ENCODE measurements at regions of chr4 and their contacts with region 1.

Region 1: DNA sequence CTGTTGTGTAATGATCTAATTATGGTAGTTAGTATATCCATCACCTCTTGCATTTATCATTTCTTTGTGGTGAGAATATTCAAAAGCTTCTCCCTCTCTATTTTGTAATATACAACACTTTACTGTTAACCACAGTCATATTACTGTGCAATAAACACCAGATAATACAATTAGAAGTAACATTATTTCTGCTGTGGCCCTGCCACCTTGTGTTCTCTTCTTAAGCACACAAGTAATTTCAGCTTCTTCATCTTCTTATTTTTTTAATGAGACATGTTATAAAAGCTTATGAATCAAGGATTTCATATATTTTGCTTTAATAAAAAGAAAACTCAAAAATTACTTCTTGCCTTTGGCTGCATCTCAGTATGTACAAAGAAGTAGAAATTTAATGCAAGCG is 675.2 kb upstream of the INTU start:
- DNase-seq: peak in 1 of 4 experiments; percentile 45
- ATAC-seq: no peak
- H3K4me3 ChIP-seq: peak overlapping the region; percentile 50
- H3K27ac ChIP-seq: peak overlapping the region; percentile 72; the same call in 2 of the 3 replicates
- H3K4me1 ChIP-seq: peaks cover 0 to 11% of the 10 kb centered on the region in 2 experiments; a peak in 1 of 5 replicates
- H3K27me3 ChIP-seq: no peaks in the 10 kb centered on the region
- CTCF ChIP-seq: peak in 1 of 3 experiments; percentile 31; a peak in 1 of 6 replicates
- EP300 ChIP-seq: no peak
- POLR2A ChIP-seq: no peak
- RAD21 ChIP-seq: peak in 1 of 2 experiments; percentile 50; a peak in 2 of 4 replicates

Region 2: GRCh38 chr4:126611900-126612299 is 345.7 kb before region 1 on chr4:
- CTCF ChIA-PET with region 1: no interaction called
- POLR2A ChIA-PET with region 1: interaction called, 3 read pairs
- in situ Hi-C with region 1: no loop called
- intact Hi-C with region 1: loop called (anchors 5 kb)
- DNase-seq: no peak
- ATAC-seq: no peak
- H3K4me3 ChIP-seq: no peak overlapping the region
- H3K27ac ChIP-seq: no peak overlapping the region; the same call in 2 of the 3 replicates
- H3K4me1 ChIP-seq: peaks cover 0 to 3% of the 10 kb centered on the region in 2 experiments; a peak in 3 of 5 replicates
- H3K27me3 ChIP-seq: no peaks in the 10 kb centered on the region
- CTCF ChIP-seq: no peak
- EP300 ChIP-seq: no peak
- POLR2A ChIP-seq: no peak
- RAD21 ChIP-seq: no peak

Region 3: GRCh38 chr4:126733301-126733700 is 224.3 kb before region 1 on chr4:
- CTCF ChIA-PET with region 1: no interaction called
- POLR2A ChIA-PET with region 1: interaction called, 3 read pairs
- in situ Hi-C with region 1: no loop called
- intact Hi-C with region 1: loop called (anchors 1 kb)
- DNase-seq: peak in 1 of 4 experiments; percentile 47
- ATAC-seq: peak; percentile 59
- H3K4me3 ChIP-seq: peak overlapping the region; percentile 48
- H3K27ac ChIP-seq: peak overlapping the region; percentile 78
- H3K4me1 ChIP-seq: peaks cover 0 to 13% of the 10 kb centered on the region in 2 experiments; a peak in 4 of 5 replicates
- H3K27me3 ChIP-seq: no peaks in the 10 kb centered on the region
- CTCF ChIP-seq: no peak
- EP300 ChIP-seq: peak; percentile 9; the same call in 1 of the 2 replicates
- POLR2A ChIP-seq: no peak
- RAD21 ChIP-seq: no peak

Region 4: DNA sequence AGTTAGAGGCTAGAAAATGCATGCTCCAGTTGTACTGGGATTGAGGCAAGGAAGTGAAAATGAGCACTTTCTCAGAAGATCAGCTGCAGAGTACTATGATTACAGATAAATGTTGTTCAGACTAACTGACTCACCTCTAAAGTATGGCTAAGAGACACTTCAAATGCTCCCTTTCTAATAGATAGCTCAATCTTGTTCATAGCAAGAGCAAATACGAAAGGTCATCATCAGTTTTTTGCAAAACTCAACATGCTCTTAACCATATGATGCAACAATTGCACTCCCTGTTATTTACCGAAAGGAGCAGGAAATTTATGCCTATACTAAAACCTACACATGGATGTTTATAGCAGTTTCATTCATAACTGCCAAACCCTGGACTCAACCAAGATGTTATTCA is 163.2 kb before region 1 on chr4:
- CTCF ChIA-PET with region 1: no interaction called
- POLR2A ChIA-PET with region 1: interaction called, 11 read pairs
- in situ Hi-C with region 1: no loop called
- intact Hi-C with region 1: loop called (anchors 5 kb)
- DNase-seq: peak in 1 of 4 experiments; percentile 46
- ATAC-seq: peak; percentile 66
- H3K4me3 ChIP-seq: no peak overlapping the region
- H3K27ac ChIP-seq: peak overlapping the region; percentile 35
- H3K4me1 ChIP-seq: peaks cover 0 to 7% of the 10 kb centered on the region in 2 experiments; a peak in 2 of 5 replicates
- H3K27me3 ChIP-seq: no peaks in the 10 kb centered on the region
- CTCF ChIP-seq: no peak
- EP300 ChIP-seq: peak; percentile 70
- POLR2A ChIP-seq: no peak
- RAD21 ChIP-seq: peak in 1 of 2 experiments; percentile 14; a peak in 2 of 4 replicates

Region 5: GRCh38 chr4:126916626-126917140 is 40.9 kb before region 1 on chr4:
- CTCF ChIA-PET with region 1: no interaction called
- POLR2A ChIA-PET with region 1: no interaction called
- in situ Hi-C with region 1: no loop called
- intact Hi-C with region 1: loop called (anchors 2 kb)
- DNase-seq: peak in 3 of 4 experiments; percentile 20 to 83 (median 47)
- ATAC-seq: peak; percentile 96
- H3K4me3 ChIP-seq: no peak overlapping the region
- H3K27ac ChIP-seq: peak overlapping the region; percentile 66
- H3K4me1 ChIP-seq: peaks cover 0 to 11% of the 10 kb centered on the region in 2 experiments; a peak in 1 of 5 replicates
- H3K27me3 ChIP-seq: no peaks in the 10 kb centered on the region
- CTCF ChIP-seq: no peak
- EP300 ChIP-seq: no peak; the same call in 1 of the 2 replicates
- POLR2A ChIP-seq: no peak
- RAD21 ChIP-seq: no peak

Region 6: DNA sequence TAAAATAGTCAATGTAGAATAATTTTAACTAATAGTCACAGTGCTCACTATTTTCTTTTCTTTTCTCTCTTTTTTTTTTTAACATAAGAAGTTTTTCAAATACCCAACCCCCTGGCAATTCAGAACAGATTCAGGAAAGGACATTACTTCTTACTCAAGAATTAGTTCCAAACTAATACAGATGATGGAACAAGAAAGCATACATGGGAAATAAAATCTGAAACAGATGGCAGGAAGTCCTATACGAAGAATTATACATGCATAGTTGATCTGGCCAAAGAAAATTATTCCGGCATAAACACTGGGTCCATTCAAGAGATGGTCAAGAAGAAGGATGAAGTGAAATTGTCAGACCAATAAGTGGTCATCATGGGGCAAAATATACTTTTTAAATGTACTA is 60.8 kb after region 1 on chr4:
- CTCF ChIA-PET with region 1: no interaction called
- POLR2A ChIA-PET with region 1: no interaction called
- in situ Hi-C with region 1: no loop called
- intact Hi-C with region 1: no loop called
- DNase-seq: no peak
- ATAC-seq: no peak
- H3K4me3 ChIP-seq: no peak overlapping the region
- H3K27ac ChIP-seq: no peak overlapping the region
- H3K4me1 ChIP-seq: peaks cover 0 to 4% of the 10 kb centered on the region in 2 experiments; a peak in 1 of 5 replicates
- H3K27me3 ChIP-seq: no peaks in the 10 kb centered on the region
- CTCF ChIP-seq: no peak
- EP300 ChIP-seq: no peak
- POLR2A ChIP-seq: no peak
- RAD21 ChIP-seq: no peak